ENCODE measurements at regions of chr11 and their contacts with region 1.

Region 1: GRCh38 chr11:94171693-94172440 is 43.2 kb downstream of the PANX1 start:
- DNase-seq: no peak
- H3K4me3 ChIP-seq: no peak overlapping the region
- H3K27ac ChIP-seq: no peak overlapping the region
- H3K4me1 ChIP-seq: peaks cover 0 to 24% (median 10%) of the 10 kb centered on the region in 4 donors
- H3K27me3 ChIP-seq: no peaks in the 10 kb centered on the region
- CTCF ChIP-seq: peak in 1 of 4 experiments; percentile 50
- EP300 ChIP-seq: no peak
- POLR2A ChIP-seq: no peak

Region 2: GRCh38 chr11:93887111-93887510 is 284.8 kb before region 1 on chr11:
- intact Hi-C with region 1: no loop called
- DNase-seq: no peak
- H3K4me3 ChIP-seq: no peak overlapping the region
- H3K27ac ChIP-seq: no peak overlapping the region
- H3K4me1 ChIP-seq: peaks cover 0 to 6% (median 2%) of the 10 kb centered on the region in 4 donors
- H3K27me3 ChIP-seq: no peaks in the 10 kb centered on the region
- CTCF ChIP-seq: no peak
- EP300 ChIP-seq: no peak
- POLR2A ChIP-seq: no peak

Region 3: GRCh38 chr11:94493281-94494125 is 321.6 kb after region 1 on chr11 and contains the starts of genes ANKRD49 and MRE11:
- intact Hi-C with region 1: loop called (anchors 10 kb)
- DNase-seq: peak; percentile 99
- H3K4me3 ChIP-seq: peak within 1 kb of the TSS; percentile 72 to 92 (median 82)
- H3K27ac ChIP-seq: peak within 1 kb of the TSS; percentile 82 to 88 (median 86)
- H3K4me1 ChIP-seq: peaks cover 0 to 30% (median 28%) of the 10 kb centered on the region in 4 donors
- H3K27me3 ChIP-seq: no peaks in the 10 kb centered on the region
- CTCF ChIP-seq: no peak
- EP300 ChIP-seq: no peak
- POLR2A ChIP-seq: peak; percentile 68 to 72
- total RNA-seq, gene ANKRD49: 19.3 to 27.7 (median 23.4) TPM
- total RNA-seq, gene MRE11: 12.5 to 26.6 (median 16.3) TPM

Measured in sigmoid colon (tissue), 7 donors.